ENCODE measurements at regions of chr17 and their contacts with region 1.

Region 1: GRCh38 chr17:56786989-56787482 is 46.7 kb downstream of the C17orf67 start:
- DNase-seq: peak; percentile 99
- H3K4me3 ChIP-seq: no peak overlapping the region
- H3K27ac ChIP-seq: peak overlapping the region; percentile 79
- H3K4me1 ChIP-seq: peaks cover 36% of the 10 kb centered on the region
- H3K27me3 ChIP-seq: no peaks in the 10 kb centered on the region
- CTCF ChIP-seq: no peak

Region 2: GRCh38 chr17:56009795-56010651 is 777.0 kb before region 1 on chr17:
- CTCF ChIA-PET with region 1: no interaction called
- dilution Hi-C with region 1: no loop called
- in situ Hi-C with region 1: no loop called
- intact Hi-C with region 1: no loop called
- DNase-seq: no peak
- H3K4me3 ChIP-seq: no peak overlapping the region
- H3K27ac ChIP-seq: no peak overlapping the region
- H3K4me1 ChIP-seq: no peaks in the 10 kb centered on the region
- H3K27me3 ChIP-seq: no peaks in the 10 kb centered on the region
- CTCF ChIP-seq: no peak

Region 3: DNA sequence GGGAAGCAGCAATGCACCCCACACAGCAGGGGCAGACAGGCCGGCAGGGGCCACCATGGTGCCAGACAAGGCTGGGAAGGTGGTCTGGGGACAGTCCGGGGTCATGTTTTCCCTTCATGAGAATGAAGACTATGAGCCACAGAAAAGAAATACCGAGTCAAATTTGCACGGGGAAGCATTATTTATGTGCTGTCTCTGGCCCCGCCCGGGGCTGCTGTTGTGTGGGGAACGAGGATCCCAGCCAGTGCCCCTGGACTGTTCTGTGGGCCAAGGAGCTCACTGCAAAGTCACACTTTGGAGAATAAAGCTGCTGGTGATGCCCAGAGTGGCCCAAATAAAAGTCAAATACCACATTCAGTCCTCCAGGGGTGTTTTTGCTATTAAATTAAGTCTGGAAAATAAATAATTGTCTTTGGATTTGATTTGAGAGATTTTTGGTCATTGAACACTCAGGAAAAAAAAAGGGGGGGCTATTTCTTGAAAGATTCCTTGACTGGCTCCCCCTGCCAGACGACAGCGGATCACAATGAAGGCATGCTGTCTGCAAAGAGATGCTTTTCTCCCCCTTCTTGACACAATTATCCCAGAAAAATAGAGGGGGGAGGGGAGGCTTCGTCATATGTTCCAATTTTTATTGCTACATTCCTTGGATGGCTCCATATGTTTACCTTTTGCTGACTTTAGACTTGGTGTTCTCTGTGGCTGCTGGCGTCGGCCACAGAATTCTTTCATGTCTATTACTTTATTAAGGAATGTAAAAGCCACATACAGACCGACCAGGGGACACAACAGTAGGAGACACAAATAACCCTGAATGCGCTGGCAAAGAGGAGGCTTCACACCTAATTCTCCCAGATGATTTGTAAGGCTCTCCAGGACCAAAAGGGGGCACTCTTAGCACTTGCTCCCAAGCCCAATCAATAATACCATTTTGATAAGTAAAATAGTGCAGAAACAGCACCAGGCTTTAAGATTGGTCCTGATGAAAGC is 660.9 kb before region 1 on chr17:
- CTCF ChIA-PET with region 1: no interaction called
- dilution Hi-C with region 1: no loop called
- in situ Hi-C with region 1: no loop called
- intact Hi-C with region 1: no loop called
- DNase-seq: peak; percentile 17
- H3K4me3 ChIP-seq: no peak overlapping the region
- H3K27ac ChIP-seq: no peak overlapping the region
- H3K4me1 ChIP-seq: no peaks in the 10 kb centered on the region
- H3K27me3 ChIP-seq: no peaks in the 10 kb centered on the region
- CTCF ChIP-seq: peak; percentile 60 to 77

Region 4: GRCh38 chr17:56833809-56834379 is 46.9 kb after region 1 on chr17 and contains the starts of genes C17orf67 and DGKE:
- CTCF ChIA-PET with region 1: no interaction called
- dilution Hi-C with region 1: no loop called
- in situ Hi-C with region 1: no loop called
- intact Hi-C with region 1: loop called (anchors 1 kb)
- DNase-seq: peak; percentile 94
- H3K4me3 ChIP-seq: peak within 1 kb of the TSS; percentile 71 to 90 (median 74)
- H3K27ac ChIP-seq: peak within 1 kb of the TSS; percentile 66
- H3K4me1 ChIP-seq: peaks cover 30% of the 10 kb centered on the region
- H3K27me3 ChIP-seq: no peaks in the 10 kb centered on the region
- CTCF ChIP-seq: no peak
- total RNA-seq, gene C17orf67: 0.17 to 2.6 TPM
- total RNA-seq, gene DGKE: 6.7 to 13.4 TPM

Measured in mammary epithelial cell (primary cell).